Left cardiac atrium (tissue), 4 donors: ENCODE measurements at regions of chr13 and their contacts with region 1.

Region 1: DNA sequence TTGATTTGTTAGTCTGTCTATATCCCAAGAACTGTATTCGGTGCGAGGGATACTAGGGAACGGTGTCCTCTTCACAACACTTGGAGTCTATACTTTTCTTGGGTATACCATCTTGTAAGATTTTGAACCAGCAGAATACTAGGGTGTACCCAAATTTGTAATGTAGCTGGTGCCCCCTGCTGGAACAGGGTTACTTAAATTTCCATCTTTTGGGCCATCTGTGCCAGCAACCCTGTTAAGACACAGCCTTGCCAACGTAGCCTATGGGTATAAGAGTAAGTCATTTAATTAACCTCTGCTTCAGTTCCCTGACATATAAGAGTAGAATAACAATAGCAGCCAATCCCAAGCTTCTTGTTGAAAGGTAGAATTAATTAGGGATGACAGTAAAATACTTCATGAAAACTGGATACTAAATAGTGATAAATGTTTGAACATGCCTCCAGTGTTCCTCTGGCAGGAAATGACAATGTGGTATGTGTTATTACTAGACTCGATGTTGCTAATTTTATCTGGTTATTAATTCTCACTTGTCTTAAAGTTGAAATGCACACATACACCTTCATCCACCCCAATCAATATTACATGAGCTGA is 607.6 kb downstream of the FGF9 start:
- DNase-seq: peak; percentile 55
- ATAC-seq: peak; percentile 27 to 71

Region 2: GRCh38 chr13:21383090-21383489 is 895.3 kb before region 1 on chr13:
- intact Hi-C with region 1: no loop called
- DNase-seq: no peak
- ATAC-seq: no peak

Region 3: GRCh38 chr13:21638319-21639282 is 639.8 kb before region 1 on chr13:
- intact Hi-C with region 1: loop called in 1 of 2 experiments (anchors 10 kb)
- DNase-seq: no peak
- ATAC-seq: peak in 1 of 2 donors; percentile 30